Panc1 (cell line): ENCODE measurements at regions of chr2 and their contacts with region 1.

Region 1: DNA sequence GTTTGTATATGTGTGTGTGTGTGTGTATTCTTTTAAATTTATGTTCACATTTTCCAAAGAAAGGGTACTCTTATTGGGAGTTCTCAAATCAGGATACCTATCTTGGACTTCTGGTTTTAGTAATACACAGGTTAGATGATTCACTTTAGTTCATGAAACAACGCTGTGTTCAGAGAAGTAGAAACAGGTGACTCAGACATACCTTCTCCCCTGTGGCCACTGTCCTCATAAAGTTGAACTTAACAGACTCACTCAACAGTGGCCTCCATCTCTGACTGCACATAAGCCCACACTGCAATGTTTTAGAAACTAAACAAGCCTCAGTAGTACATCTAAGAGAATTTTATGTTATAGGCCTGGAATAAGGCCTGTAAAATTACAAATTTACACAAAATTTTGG is 566.6 kb upstream of the VRK2 start:
- DNase-seq: no peak
- ATAC-seq: no peak
- H3K4me3 ChIP-seq: no peak overlapping the region
- H3K27ac ChIP-seq: no peak overlapping the region
- H3K4me1 ChIP-seq: no peaks in the 10 kb centered on the region
- H3K27me3 ChIP-seq: no peaks in the 10 kb centered on the region
- CTCF ChIP-seq: no peak

Region 2: GRCh38 chr2:56889738-56890137 is 590.3 kb before region 1 on chr2:
- CTCF ChIA-PET with region 1: no interaction called
- POLR2A ChIA-PET with region 1: interaction called, 10 read pairs
- in situ Hi-C with region 1: no loop called
- intact Hi-C with region 1: no loop called
- DNase-seq: no peak
- ATAC-seq: no peak
- H3K4me3 ChIP-seq: no peak overlapping the region
- H3K27ac ChIP-seq: no peak overlapping the region
- H3K4me1 ChIP-seq: no peaks in the 10 kb centered on the region
- H3K27me3 ChIP-seq: no peaks in the 10 kb centered on the region
- CTCF ChIP-seq: no peak

Region 3: GRCh38 chr2:57126410-57126809 is 353.6 kb before region 1 on chr2:
- CTCF ChIA-PET with region 1: no interaction called
- POLR2A ChIA-PET with region 1: no interaction called
- in situ Hi-C with region 1: no loop called
- intact Hi-C with region 1: no loop called
- DNase-seq: no peak
- ATAC-seq: no peak
- H3K4me3 ChIP-seq: no peak overlapping the region
- H3K27ac ChIP-seq: no peak overlapping the region
- H3K4me1 ChIP-seq: no peaks in the 10 kb centered on the region
- H3K27me3 ChIP-seq: no peaks in the 10 kb centered on the region
- CTCF ChIP-seq: no peak

Region 4: GRCh38 chr2:57321908-57322307 is 158.1 kb before region 1 on chr2:
- CTCF ChIA-PET with region 1: no interaction called
- POLR2A ChIA-PET with region 1: no interaction called
- in situ Hi-C with region 1: no loop called
- intact Hi-C with region 1: no loop called
- DNase-seq: no peak
- ATAC-seq: no peak
- H3K4me3 ChIP-seq: no peak overlapping the region
- H3K27ac ChIP-seq: no peak overlapping the region
- H3K4me1 ChIP-seq: no peaks in the 10 kb centered on the region
- H3K27me3 ChIP-seq: no peaks in the 10 kb centered on the region
- CTCF ChIP-seq: no peak

Region 5: DNA sequence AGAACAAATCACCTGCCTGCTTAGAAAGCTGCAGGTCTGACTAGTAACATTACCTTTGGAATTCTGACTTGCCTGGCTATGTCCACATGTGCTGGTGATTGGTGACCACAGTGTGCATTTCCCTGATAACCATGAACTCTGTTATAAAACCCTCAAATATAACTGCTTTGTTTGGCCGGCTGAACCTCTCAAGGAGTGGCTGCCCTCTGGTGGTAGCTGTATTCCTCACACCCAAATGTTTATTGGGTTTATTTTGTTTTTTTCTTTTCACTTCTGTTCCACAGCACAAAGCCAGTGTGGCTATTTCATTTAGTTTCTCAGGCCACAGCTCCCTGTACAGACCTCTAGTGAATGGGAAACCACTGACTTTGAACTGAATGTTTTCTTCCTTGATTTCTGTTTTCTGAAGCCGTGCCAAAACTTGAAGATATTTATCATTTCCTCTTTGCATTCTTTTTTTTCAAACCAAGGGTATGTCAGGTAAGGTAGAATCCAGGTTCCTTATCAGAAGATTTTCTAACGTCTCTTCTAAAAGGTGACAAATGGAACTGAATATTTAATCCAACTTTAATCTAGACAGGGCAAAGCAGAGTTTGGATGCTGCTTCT is 17.6 kb after region 1 on chr2:
- CTCF ChIA-PET with region 1: interaction called, 11 read pairs
- POLR2A ChIA-PET with region 1: no interaction called
- in situ Hi-C with region 1: no loop called
- intact Hi-C with region 1: no loop called
- DNase-seq: peak; percentile 28
- ATAC-seq: 0 out of 2 replicates have a peak, but pooled peaks have one; percentile 53
- H3K4me3 ChIP-seq: no peak overlapping the region
- H3K27ac ChIP-seq: no peak overlapping the region
- H3K4me1 ChIP-seq: no peaks in the 10 kb centered on the region
- H3K27me3 ChIP-seq: no peaks in the 10 kb centered on the region
- CTCF ChIP-seq: peak; percentile 87